GM18951 (cell line): ENCODE measurements at regions of chr1 and their contacts with region 1.

Region 1: GRCh38 chr1:50368179-50369012 is 54.8 kb downstream of the DMRTA2 start:
- POLR2A ChIP-seq: no peak

Region 2: GRCh38 chr1:50610563-50610962 is 242.2 kb after region 1 on chr1:
- in situ Hi-C with region 1: loop called (anchors 10 kb)
- POLR2A ChIP-seq: no peak

Region 3: DNA sequence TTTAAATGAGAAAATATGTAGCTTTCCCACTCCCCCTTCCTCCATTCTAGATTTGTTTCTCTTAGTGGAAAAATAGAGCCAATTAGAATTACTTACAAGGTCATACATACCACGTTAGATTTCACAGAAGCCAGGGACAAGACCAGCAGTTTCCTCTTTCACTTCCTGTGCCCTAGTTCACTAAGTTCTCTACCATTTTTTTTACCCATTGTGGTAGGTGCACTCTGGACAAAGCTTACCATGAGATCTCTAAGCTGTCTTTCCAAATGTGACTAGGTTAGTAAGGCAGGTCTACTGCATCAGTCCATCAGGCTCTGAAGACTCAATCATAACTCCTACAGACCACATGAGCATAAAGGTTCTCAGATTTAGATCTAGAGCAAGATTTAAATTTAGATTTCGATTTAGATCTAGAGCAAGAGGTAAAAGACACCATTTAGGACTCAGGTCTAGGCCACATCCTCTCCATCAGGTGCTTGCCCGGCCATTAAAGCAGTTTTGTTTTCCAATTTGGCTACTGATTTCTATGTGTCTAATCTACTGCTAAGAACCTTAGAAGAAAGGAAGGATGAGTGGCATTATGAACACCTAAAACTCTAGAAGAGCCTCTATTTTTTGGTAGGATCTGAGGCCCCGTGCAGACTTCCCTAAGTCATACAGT is 356.4 kb after region 1 on chr1:
- in situ Hi-C with region 1: loop called (anchors 10 kb)
- POLR2A ChIP-seq: no peak

Region 4: DNA sequence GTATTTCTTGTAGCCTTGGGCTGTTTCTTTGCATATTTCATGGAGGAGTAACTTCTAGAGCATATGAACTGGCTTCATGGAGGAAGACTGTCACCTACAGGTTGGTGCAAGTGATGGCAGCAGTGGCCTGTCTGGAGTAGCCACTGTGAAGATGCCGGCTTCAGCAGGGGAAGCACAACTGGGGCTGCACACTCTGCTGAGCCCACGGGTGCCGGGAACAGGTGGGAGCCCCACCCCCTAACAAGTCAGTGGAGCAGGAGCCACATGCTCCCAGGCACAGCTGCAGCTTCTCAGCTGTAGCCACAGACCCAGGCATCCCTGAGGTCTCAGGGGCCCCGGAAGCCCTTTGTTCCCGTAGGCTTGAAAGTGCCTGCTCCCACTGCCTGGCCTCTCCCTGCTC is 690.5 kb after region 1 on chr1:
- in situ Hi-C with region 1: loop called (anchors 25 kb)
- POLR2A ChIP-seq: no peak